ENCODE measurements at regions of chr3 and their contacts with region 1.

Region 1: GRCh38 chr3:170811928-170812591 is 57.9 kb downstream of the RPL22L1 start:
- DNase-seq: peak; percentile 77
- ATAC-seq: peak; percentile 88
- H3K4me3 Mint-ChIP-seq: no peak overlapping the region
- H3K27ac Mint-ChIP-seq: no peak overlapping the region
- H3K4me1 Mint-ChIP-seq: peaks cover 4% of the 10 kb centered on the region
- H3K27me3 Mint-ChIP-seq: no peaks in the 10 kb centered on the region

Region 2: DNA sequence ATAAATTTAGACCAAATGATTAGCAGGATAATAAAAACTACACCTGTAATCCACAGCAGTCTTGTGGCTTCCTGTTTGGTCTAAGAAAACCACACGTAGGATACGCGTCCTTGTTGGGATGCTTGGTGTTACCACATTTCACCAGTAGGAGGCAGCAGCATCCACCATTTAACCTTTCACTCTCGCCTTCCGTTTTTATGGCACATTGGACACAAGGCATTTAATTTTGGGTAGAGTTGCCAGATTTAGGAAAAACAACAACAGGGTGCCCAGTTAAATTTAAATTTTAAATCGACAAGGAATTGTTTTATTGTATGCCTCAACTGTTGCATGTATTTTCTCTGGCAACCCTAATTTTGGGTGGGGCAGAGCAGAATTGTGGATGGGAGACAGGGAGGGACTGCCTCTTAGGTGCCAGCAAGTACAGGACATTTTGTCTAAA is 948.6 kb before region 1 on chr3:
- CTCF ChIA-PET with region 1: no interaction called
- POLR2A ChIA-PET with region 1: no interaction called
- intact Hi-C with region 1: loop called in 1 of 2 experiments (anchors 1 kb)
- DNase-seq: peak; percentile 77
- ATAC-seq: peak; percentile 61
- H3K4me3 Mint-ChIP-seq: no peak overlapping the region
- H3K27ac Mint-ChIP-seq: no peak overlapping the region
- H3K4me1 Mint-ChIP-seq: peaks cover 18% of the 10 kb centered on the region
- H3K27me3 Mint-ChIP-seq: peaks cover 4% of the 10 kb centered on the region

Region 3: DNA sequence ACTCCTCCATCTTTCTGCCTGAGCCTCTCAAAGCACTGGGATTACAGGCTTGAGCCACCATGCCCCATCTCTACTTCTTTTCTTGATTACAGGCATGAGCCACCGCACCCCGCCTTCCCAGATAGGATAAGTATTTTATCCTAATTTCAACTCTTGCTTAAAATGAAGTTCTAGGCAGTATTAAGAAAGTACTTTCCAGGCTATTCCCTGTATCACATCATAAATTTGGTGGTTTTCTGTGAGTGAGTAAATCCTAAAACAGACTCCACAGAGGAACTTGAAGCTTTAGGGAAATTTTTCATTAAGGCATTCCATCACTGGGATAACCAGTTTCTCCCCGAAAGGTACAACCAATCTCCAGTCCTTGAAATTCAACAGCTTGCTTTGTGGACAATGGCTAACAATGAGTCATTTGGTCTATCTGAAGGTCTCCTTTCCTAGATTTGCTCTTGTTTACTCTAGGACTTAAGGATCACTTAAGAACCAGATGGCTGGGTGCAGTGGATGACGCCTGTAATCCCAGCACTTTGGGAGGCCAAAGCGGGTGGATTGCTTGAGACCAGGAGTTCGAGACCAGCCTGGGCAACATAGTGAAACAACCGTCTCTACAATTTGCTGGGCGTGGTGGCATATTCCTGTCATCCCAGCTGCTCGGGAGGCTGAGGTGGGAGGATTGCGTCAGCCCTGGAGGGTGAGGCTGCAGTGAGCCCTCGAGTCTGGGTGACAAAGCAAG is 504.2 kb before region 1 on chr3:
- CTCF ChIA-PET with region 1: interaction called, 3 read pairs
- POLR2A ChIA-PET with region 1: no interaction called
- intact Hi-C with region 1: loop called in 1 of 2 experiments (anchors 5 kb)
- DNase-seq: no peak
- ATAC-seq: no peak
- H3K4me3 Mint-ChIP-seq: no peak overlapping the region
- H3K27ac Mint-ChIP-seq: no peak overlapping the region
- H3K4me1 Mint-ChIP-seq: no peaks in the 10 kb centered on the region
- H3K27me3 Mint-ChIP-seq: no peaks in the 10 kb centered on the region

Region 4: DNA sequence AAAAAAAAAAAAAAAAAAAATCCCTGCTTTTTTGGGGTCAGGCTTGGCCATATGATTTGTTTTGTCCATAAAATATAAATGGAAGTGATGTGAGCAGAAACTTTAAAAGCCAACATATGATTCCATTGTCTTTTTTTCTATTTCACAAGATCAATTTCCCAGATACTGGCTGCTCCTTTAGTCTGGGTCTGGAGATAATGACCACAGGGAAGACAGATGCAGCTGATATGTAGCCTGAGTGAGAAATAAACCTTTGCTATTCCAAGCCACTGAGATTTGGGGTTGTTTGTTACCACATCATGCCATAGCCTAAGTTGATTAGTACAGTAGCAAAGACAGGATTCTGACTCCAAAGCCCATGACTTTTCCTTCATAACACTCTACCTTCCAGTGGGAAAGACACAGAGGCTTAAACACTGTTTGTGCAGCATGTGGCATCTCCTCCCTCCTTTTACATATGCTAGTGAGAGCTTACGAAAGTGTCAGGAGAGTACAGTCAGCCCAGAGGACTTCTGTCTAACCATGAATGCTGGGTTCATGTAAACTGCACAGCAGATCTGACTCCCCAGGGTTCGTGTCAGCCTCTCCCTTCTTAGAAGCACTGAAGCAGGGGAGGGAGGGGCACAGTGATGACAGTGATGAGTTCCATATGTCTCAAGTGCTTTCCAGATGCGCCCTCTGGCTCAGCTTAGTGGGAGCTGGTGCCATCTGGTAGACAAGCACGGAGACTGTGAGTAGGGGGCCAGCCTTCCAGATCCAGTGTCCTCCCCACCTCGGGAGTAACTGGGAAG is 189.5 kb before region 1 on chr3:
- CTCF ChIA-PET with region 1: no interaction called
- POLR2A ChIA-PET with region 1: no interaction called
- intact Hi-C with region 1: no loop called
- DNase-seq: no peak
- ATAC-seq: no peak
- H3K4me3 Mint-ChIP-seq: no peak overlapping the region
- H3K27ac Mint-ChIP-seq: no peak overlapping the region
- H3K4me1 Mint-ChIP-seq: no peaks in the 10 kb centered on the region
- H3K27me3 Mint-ChIP-seq: peaks cover 17% of the 10 kb centered on the region

Region 5: DNA sequence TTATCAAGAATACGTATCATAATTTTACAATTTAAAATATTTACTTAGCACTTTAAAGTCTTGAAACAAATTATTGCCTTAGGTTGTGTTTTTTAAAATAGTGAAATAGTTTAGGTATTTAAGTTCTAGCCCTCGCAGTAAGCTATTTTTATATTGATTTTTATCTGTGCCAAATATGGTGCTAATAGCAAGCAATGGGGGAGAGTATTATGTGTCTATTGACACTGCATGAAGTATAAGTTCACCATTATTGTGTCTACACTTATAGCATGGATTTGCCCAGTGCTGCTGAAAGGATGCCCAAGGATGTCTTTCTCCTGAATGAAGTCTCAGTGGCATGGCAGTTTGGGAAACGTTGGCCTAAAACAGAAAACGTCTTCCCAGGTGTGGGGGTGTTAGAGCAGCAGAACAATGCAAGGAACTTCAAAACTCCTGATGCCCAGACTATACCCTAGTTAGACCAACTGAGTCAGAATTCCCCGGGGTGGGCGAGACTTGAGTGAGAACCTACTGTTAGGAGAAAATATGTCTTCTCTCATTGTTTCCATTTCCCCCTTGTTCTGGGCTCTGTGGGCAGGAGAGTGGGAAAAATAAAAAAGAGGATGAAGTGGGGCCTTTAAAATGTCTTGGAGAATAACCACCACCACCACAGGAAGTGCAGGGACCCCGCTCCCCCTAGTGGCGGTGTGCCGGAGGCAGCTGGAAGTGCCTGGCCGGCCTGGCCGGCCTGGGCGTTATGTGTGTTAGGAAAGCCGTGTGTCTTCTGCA is 122.0 kb before region 1 on chr3:
- CTCF ChIA-PET with region 1: interaction called, 9 read pairs
- POLR2A ChIA-PET with region 1: no interaction called
- intact Hi-C with region 1: loop called in 1 of 2 experiments (anchors 5 kb)
- DNase-seq: peak; percentile 73
- ATAC-seq: peak; percentile 49
- H3K4me3 Mint-ChIP-seq: no peak overlapping the region
- H3K27ac Mint-ChIP-seq: no peak overlapping the region
- H3K4me1 Mint-ChIP-seq: peaks cover 4% of the 10 kb centered on the region
- H3K27me3 Mint-ChIP-seq: no peaks in the 10 kb centered on the region

Region 6: GRCh38 chr3:170829546-170830272 is 17.6 kb after region 1 on chr3:
- CTCF ChIA-PET with region 1: interaction called, 19 read pairs
- POLR2A ChIA-PET with region 1: no interaction called
- intact Hi-C with region 1: no loop called
- DNase-seq: no peak
- ATAC-seq: no peak
- H3K4me3 Mint-ChIP-seq: no peak overlapping the region
- H3K27ac Mint-ChIP-seq: no peak overlapping the region
- H3K4me1 Mint-ChIP-seq: peaks cover 9% of the 10 kb centered on the region
- H3K27me3 Mint-ChIP-seq: peaks cover 21% of the 10 kb centered on the region

Region 7: GRCh38 chr3:170835336-170835735 is 23.3 kb after region 1 on chr3:
- CTCF ChIA-PET with region 1: interaction called, 19 read pairs
- POLR2A ChIA-PET with region 1: no interaction called
- intact Hi-C with region 1: no loop called
- DNase-seq: no peak
- ATAC-seq: no peak
- H3K4me3 Mint-ChIP-seq: no peak overlapping the region
- H3K27ac Mint-ChIP-seq: no peak overlapping the region
- H3K4me1 Mint-ChIP-seq: no peaks in the 10 kb centered on the region
- H3K27me3 Mint-ChIP-seq: peaks cover 26% of the 10 kb centered on the region

Region 8: GRCh38 chr3:170848292-170848917 is 36.3 kb after region 1 on chr3:
- CTCF ChIA-PET with region 1: interaction called, 18 read pairs
- POLR2A ChIA-PET with region 1: no interaction called
- intact Hi-C with region 1: no loop called
- DNase-seq: no peak
- ATAC-seq: no peak
- H3K4me3 Mint-ChIP-seq: no peak overlapping the region
- H3K27ac Mint-ChIP-seq: no peak overlapping the region
- H3K4me1 Mint-ChIP-seq: peaks cover 4% of the 10 kb centered on the region
- H3K27me3 Mint-ChIP-seq: peaks cover 10% of the 10 kb centered on the region

Measured in activated CD4-positive, alpha-beta T cell treated with anti-CD3 and anti-CD28 coated beads for 36 hours (primary cell).